ENCODE measurements at regions of chr11 and their contacts with region 1.

Region 1: DNA sequence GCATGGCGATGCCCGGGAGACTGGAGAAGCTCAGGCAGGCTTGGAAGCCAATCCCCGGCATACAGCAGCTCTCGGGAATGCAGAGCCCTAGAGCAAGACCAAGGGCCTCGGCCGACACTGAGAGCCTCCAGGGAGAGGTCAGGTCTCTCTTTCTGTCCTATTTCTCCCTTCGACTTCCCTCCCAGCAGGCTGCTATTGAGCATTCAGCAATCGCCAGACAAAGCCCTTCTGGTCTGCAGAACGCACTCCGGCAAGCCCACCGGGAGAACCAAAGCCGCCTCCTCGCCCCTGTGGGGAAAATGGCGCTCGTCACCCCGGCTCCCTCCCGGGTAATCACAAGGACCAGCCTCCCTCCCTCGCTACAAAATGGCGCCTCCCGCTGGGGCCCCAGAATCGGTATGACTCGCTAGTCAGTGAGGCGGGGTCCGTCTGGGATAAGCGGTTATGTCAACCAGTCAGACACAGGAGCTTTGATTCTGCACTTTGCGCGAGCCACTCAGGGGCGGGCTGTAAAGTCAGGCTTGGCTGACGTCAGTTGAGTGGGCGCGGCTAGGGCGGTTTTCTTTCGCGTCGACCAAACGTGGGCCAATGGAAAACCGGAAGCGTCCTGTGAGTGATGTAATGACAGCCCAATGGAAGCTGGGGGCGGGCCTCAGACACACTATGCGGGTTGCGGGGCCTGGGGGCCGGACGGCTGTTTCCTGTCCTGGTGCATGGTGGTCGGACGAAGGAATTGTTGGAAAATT is at the start of gene ZNF143:
- DNase-seq: peak; percentile 100
- H3K4me3 ChIP-seq: peak within 1 kb of the TSS; percentile 84 to 99 (median 94)
- H3K27ac ChIP-seq: peak within 1 kb of the TSS; percentile 99
- H3K4me1 ChIP-seq: no peaks in the 10 kb centered on the region; a peak in 1 of 7 replicates
- H3K27me3 ChIP-seq: no peaks in the 10 kb centered on the region
- CTCF ChIP-seq: no peak
- EP300 ChIP-seq: no peak
- POLR2A ChIP-seq: peak in 1 of 2 experiments; percentile 73; a peak in 2 of 3 replicates
- RAD21 ChIP-seq: peak in 1 of 2 experiments; percentile 3; a peak in 1 of 4 replicates
- total RNA-seq, gene ZNF143: 38.9 and 43.0 TPM in 2 replicates

Region 2: GRCh38 chr11:9265211-9266131 is 195.0 kb before region 1 on chr11 and contains the start of gene DENND5A:
- CTCF ChIA-PET with region 1: no interaction called
- POLR2A ChIA-PET with region 1: interaction called, 15 read pairs
- DNase-seq: peak; percentile 61 to 82
- H3K4me3 ChIP-seq: peak within 1 kb of the TSS; percentile 79 to 96 (median 88)
- H3K27ac ChIP-seq: peak within 1 kb of the TSS; percentile 65; the same call in 1 of the 2 replicates
- H3K4me1 ChIP-seq: peaks cover 2 to 4% (median 3%) of the 10 kb centered on the region in 4 experiments; a peak in 3 of 7 replicates
- H3K27me3 ChIP-seq: no peaks in the 10 kb centered on the region
- CTCF ChIP-seq: no peak
- EP300 ChIP-seq: no peak
- POLR2A ChIP-seq: peak; percentile 71 to 87
- RAD21 ChIP-seq: no peak
- total RNA-seq, gene DENND5A: 65.7 and 69.2 TPM in 2 replicates

Region 3: GRCh38 chr11:9384535-9385303 is 75.8 kb before region 1 on chr11 and contains the start of gene IPO7:
- CTCF ChIA-PET with region 1: no interaction called
- POLR2A ChIA-PET with region 1: interaction called, 46 read pairs
- DNase-seq: peak; percentile 75 to 85
- H3K4me3 ChIP-seq: peak within 1 kb of the TSS; percentile 82 to 97 (median 92)
- H3K27ac ChIP-seq: peak within 1 kb of the TSS; percentile 93
- H3K4me1 ChIP-seq: no peaks in the 10 kb centered on the region; a peak in 2 of 7 replicates
- H3K27me3 ChIP-seq: no peaks in the 10 kb centered on the region
- CTCF ChIP-seq: peak in 1 of 3 experiments; percentile 29; a peak in 1 of 4 replicates
- EP300 ChIP-seq: no peak
- POLR2A ChIP-seq: peak; percentile 96
- RAD21 ChIP-seq: peak in 1 of 2 experiments; percentile 8; a peak in 1 of 4 replicates
- total RNA-seq, gene IPO7: 244 and 259 TPM in 2 replicates

Region 4: DNA sequence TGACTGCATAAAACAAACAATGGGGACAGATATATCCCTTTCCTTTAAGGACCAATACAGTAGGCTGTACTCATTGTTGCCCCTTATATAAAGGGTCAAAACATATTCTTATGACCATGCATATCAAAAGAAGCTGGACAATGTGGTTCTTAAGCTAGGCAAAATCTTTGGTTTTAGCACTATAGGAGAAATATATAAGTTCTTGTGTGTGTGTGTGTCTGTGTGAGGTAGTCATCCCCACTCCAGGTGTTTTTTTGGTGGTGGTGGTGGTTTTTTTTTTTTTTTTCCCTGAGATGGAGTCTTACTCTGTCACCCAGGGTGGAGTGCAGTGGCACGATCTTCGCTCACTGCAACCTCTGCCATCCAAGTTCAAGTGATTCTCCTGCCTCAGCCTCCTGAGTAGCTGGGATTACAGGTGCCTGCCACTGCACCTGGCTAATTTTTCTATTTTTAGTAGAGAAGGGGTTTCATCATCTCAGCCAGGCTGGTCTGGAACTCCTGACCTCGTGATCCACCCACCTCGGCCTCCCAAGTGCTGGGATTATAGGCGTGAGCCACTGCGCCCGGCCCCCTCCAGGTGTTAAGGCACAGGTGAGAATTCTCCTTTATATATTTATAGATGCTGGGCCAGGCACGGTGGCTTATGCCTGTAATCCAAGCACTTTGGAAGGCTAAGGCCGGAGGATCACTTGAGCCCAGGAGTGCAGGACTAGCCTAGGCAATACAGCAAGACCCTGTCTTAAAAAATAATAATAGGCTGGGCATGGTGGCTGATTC is 11.7 kb before region 1 on chr11:
- CTCF ChIA-PET with region 1: no interaction called
- POLR2A ChIA-PET with region 1: interaction called, 78 read pairs
- DNase-seq: peak in 1 of 2 experiments; percentile 47
- H3K4me3 ChIP-seq: no peak overlapping the region
- H3K27ac ChIP-seq: no peak overlapping the region
- H3K4me1 ChIP-seq: no peaks in the 10 kb centered on the region
- H3K27me3 ChIP-seq: no peaks in the 10 kb centered on the region
- CTCF ChIP-seq: no peak
- EP300 ChIP-seq: no peak
- POLR2A ChIP-seq: 0 out of 3 replicates have a peak, but pooled peaks of 1 of the 2 experiments have one; percentile 9
- RAD21 ChIP-seq: no peak

Region 5: DNA sequence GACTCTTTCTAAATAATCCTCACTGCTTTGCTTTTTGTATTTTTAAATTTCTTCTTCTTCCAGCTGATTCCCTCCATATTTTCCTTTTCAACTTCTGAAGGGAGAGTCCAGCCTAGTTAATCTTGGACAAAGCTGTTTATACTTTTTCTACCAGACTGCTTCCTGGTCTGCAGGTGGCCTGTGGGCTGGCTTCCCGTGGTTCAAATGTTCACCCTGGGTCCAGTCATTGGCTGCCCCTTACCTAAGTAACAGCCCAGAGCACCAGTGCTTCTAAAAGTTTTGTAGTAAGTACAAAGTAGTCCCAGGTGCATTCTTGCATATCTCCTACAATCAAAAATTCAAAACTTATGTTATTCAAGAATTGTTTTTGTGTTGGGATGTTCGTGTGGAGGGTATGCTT is 19.4 kb after region 1 on chr11:
- CTCF ChIA-PET with region 1: interaction called, 4 read pairs
- POLR2A ChIA-PET with region 1: interaction called, 44 read pairs
- DNase-seq: no peak
- H3K4me3 ChIP-seq: no peak overlapping the region
- H3K27ac ChIP-seq: no peak overlapping the region
- H3K4me1 ChIP-seq: no peaks in the 10 kb centered on the region
- H3K27me3 ChIP-seq: no peaks in the 10 kb centered on the region
- CTCF ChIP-seq: no peak
- EP300 ChIP-seq: no peak
- POLR2A ChIP-seq: no peak
- RAD21 ChIP-seq: no peak

Region 6: DNA sequence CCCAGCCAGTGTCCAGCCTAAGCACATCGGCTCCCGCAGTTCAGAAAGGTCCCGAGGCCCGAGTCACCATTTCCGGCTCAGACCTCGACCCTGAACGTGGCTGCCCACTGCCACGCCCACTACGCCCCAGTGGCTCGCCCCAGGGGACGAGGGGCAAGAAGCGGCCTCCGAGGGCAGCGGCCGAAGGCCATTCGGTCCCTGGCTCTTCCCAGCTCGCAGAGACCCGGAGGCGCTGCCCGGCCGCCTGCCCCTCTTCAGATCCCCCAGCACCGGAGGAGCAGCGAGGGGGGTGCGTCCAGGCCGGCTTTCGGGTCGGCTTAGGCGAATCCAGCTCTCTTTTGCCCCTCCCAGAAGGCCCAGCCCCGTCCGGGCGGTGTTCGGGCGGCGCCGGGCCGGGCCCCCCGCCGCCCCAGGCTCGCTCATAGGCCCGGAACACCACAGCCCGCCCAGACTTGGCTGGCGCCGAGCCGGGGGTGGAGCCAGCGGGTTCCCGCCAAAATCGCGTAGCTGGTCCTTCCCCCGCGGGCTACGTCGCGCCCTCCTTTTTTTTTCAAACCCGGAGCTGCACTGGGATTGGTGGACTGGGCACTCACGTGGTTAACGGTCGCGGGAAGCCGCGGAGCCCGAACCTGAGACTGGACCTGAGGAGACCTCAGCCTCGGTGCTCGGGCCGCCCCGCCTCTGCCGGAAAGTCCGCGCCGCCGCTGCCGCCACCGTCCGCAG is 112.7 kb after region 1 on chr11 and contains the start of gene WEE1:
- CTCF ChIA-PET with region 1: no interaction called
- POLR2A ChIA-PET with region 1: interaction called, 30 read pairs
- DNase-seq: peak; percentile 97 to 99
- H3K4me3 ChIP-seq: peak within 1 kb of the TSS; percentile 80 to 93 (median 84)
- H3K27ac ChIP-seq: peak within 1 kb of the TSS; percentile 92
- H3K4me1 ChIP-seq: peaks cover 5 to 14% (median 11%) of the 10 kb centered on the region in 4 experiments
- H3K27me3 ChIP-seq: no peaks in the 10 kb centered on the region
- CTCF ChIP-seq: no peak
- EP300 ChIP-seq: 0 out of 3 replicates have a peak, but pooled peaks of 1 of the 2 experiments have one; percentile 8
- POLR2A ChIP-seq: peak; percentile 74 to 86
- RAD21 ChIP-seq: no peak
- total RNA-seq, gene WEE1: 115 and 120 TPM in 2 replicates